Heart left ventricle (tissue), 16 donors: ENCODE measurements at regions of chr10 and their contacts with region 1.

Region 1: DNA sequence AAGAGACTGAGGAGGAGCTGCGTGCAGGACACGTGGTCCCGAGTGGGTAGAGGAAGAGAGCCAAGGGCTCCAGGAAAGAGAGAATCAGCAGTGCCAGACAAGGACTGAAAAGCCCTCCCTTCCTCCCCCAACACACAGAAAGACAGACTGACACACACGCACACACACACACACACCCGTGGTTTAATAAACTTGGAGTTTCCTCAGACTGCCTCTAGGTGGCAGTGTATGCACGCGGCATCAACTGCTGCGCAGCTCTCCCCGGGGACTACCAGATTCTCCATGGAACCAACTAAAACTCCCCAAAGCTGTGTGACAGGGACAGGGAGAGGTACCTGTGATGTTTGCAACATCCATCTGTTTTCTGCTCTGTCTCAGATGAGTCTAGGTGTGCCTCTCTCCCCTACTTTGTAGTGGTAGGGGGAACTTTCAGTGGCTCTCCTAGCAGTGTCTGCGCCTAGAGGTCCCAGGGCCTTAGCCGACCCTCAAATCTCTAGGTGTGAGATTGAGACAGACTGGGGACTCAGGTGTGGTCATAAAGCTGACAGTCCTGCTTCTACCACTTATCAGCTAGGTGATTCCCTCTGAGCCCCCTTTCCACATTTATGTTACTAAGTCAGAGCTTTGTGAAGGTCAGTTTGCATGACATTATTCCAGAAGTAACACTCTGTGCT is 9.3 kb upstream of the TSPAN14 start:
- DNase-seq: peak; percentile 62 to 82 (median 74)
- ATAC-seq: peak; percentile 73 to 96 (median 92)
- H3K4me3 ChIP-seq: no peak overlapping the region
- H3K27ac ChIP-seq: peak overlapping the region in 1 of 12 donors; percentile 17
- H3K4me1 ChIP-seq: peaks cover 0 to 38% (median 9%) of the 10 kb centered on the region in 12 donors
- H3K27me3 ChIP-seq: no peaks in the 10 kb centered on the region
- CTCF ChIP-seq: peak; percentile 60 to 94 (median 78)
- POLR2A ChIP-seq: no peak

Region 2: GRCh38 chr10:80382989-80383388 is 61.8 kb before region 1 on chr10:
- intact Hi-C with region 1: loop called (anchors 1 to 5 kb)
- DNase-seq: peak in 4 of 5 donors; percentile 22 to 44 (median 28)
- ATAC-seq: peak in 1 of 4 donors; percentile 36
- H3K4me3 ChIP-seq: no peak overlapping the region
- H3K27ac ChIP-seq: no peak overlapping the region
- H3K4me1 ChIP-seq: peaks cover 0 to 14% (median 0%) of the 10 kb centered on the region in 12 donors
- H3K27me3 ChIP-seq: no peaks in the 10 kb centered on the region
- CTCF ChIP-seq: peak; percentile 57 to 79 (median 72)
- POLR2A ChIP-seq: no peak

Region 3: DNA sequence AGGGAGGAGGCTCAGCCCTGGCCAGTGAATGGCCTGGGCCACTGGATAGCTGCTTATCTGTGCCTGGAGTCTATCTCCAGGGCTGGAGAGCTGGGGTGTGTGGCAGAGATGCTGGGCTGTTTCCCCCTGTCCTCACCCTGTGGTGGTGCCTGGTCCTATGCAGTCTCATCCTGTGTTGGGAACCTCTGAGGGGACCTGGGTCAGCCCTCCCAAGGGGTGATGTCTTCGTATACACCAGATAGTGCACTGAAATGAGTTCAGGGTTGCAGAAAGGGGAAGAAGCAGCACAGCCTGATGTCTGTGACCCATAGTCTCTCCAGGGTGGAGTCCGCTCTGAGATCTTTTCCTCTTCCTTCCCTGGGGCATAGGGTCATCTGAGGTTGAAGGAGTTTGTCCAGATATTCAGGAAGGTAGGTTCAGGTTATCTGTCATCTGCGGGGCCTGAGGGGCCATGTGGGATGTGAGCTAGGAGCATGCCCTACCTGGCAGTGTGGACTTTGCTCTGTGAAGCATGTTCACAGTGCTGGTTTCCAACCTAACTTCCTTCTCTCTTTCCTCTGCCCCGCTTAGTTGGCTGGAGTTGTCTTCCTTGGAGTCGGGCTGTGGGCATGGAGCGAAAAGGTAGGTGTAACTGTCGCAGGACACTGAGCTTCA is 59.5 kb after region 1 on chr10:
- intact Hi-C with region 1: loop called in 9 of 10 experiments (anchors 1 to 2 kb)
- DNase-seq: peak in 1 of 5 donors; percentile 23
- ATAC-seq: peak in 3 of 4 donors; percentile 7 to 37 (median 34)
- H3K4me3 ChIP-seq: no peak overlapping the region
- H3K27ac ChIP-seq: peak overlapping the region; percentile 19 to 95 (median 79)
- H3K4me1 ChIP-seq: peaks cover 34 to 100% (median 92%) of the 10 kb centered on the region in 12 donors
- H3K27me3 ChIP-seq: no peaks in the 10 kb centered on the region
- CTCF ChIP-seq: no peak
- POLR2A ChIP-seq: no peak

Region 4: GRCh38 chr10:80589726-80590373 is 145.1 kb after region 1 on chr10:
- intact Hi-C with region 1: loop called in 7 of 10 experiments (anchors 5 to 10 kb)
- DNase-seq: no peak
- ATAC-seq: no peak
- H3K4me3 ChIP-seq: no peak overlapping the region
- H3K27ac ChIP-seq: no peak overlapping the region
- H3K4me1 ChIP-seq: no peaks in the 10 kb centered on the region
- H3K27me3 ChIP-seq: no peaks in the 10 kb centered on the region
- CTCF ChIP-seq: no peak
- POLR2A ChIP-seq: no peak

Region 5: DNA sequence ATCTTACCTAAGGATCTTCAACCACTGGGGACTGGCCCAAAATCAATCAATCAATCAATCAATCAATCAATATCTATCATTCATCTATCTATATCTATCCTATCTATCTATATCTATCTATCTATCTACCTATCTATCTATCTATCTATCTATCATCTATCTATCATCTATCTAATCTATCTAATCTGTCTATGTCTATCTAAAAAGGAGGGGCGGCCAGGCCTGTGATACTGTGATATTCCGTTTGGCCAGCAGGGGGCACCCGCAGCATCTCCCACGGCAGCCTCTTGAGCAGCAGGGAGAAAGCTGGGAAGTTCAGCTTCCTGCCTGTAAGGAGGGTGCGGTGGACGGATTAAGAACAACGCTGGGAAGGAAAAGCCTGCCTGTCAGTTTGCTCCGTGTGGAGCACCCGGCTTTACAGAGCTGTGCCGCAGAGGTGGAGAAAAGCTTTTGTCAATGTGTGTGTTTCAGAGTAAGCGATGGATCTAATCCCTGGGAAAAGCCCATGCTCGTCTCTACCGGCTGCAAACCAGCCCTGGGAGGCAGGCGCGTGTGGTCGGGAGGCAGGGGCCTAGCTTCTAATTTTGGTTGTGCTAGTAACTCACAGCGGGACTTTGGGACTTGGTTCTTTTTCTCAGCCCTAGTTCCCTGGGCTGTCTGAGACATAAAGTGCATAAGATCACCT is 217.9 kb after region 1 on chr10:
- intact Hi-C with region 1: loop called in 4 of 10 experiments (anchors 5 to 10 kb)
- DNase-seq: peak; percentile 78 to 89 (median 81)
- ATAC-seq: peak; percentile 72 to 88 (median 86)
- H3K4me3 ChIP-seq: peak overlapping the region in 10 of 12 donors; percentile 12 to 53 (median 42)
- H3K27ac ChIP-seq: peak overlapping the region in 11 of 12 donors; percentile 31 to 80 (median 70)
- H3K4me1 ChIP-seq: peaks cover 0 to 38% (median 6%) of the 10 kb centered on the region in 12 donors
- H3K27me3 ChIP-seq: no peaks in the 10 kb centered on the region
- CTCF ChIP-seq: peak; percentile 78 to 95 (median 88)
- POLR2A ChIP-seq: peak in 1 of 2 donors; percentile 11